Mammary epithelial cell (primary cell): ENCODE measurements at regions of chr16 and their contacts with region 1.

Region 1: DNA sequence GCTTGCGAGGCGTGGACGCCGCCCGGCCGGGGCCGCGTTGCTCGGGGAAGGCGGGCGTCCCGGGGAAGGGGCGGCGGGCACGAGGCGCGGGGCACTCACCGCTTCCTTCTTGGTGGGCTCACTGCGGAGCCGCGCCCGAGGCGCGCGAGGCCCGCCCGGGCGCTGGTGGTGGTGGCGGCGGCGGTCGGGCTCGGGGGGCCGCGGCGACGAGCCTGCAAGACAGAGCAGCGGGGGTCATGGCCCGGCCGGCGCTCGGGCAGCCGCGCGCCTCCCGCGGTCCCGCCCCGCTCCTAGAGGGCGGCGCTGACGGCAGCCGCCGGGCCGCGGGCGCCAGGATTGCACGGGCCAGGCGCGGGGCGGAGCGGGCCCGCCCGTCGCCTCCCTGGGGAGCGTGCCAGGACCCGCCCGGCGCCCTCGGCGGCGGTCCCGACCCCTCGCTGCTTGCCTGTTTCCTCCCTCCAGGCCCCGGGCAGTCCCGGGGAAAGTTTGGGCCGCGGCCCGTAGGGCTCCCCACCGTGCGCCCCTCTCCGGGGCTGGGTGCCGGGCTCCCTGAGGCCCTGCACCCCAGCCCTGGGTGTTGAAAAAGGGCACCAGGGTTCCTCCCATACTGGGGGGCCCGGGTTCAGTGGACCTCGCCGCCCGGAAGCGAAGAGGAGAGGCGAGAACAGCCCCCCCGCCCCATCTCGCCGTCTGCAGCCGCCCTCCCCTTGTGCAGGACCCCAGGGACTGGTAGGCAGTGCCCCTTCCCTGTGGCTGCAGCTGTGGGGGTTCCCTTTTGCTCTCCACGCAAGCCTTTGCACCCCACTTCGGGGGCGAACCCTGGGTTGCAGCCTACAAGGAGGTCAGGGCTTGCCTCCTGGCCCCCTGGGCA is at the start of gene C16orf74:
- DNase-seq: peak; percentile 68
- H3K4me3 ChIP-seq: peak within 1 kb of the TSS; percentile 84 to 92 (median 86)
- H3K27ac ChIP-seq: peak within 1 kb of the TSS; percentile 69
- H3K4me1 ChIP-seq: peaks cover 63% of the 10 kb centered on the region
- H3K27me3 ChIP-seq: no peaks in the 10 kb centered on the region
- CTCF ChIP-seq: no peak
- total RNA-seq, gene C16orf74: 19.7 to 121 TPM

Region 2: DNA sequence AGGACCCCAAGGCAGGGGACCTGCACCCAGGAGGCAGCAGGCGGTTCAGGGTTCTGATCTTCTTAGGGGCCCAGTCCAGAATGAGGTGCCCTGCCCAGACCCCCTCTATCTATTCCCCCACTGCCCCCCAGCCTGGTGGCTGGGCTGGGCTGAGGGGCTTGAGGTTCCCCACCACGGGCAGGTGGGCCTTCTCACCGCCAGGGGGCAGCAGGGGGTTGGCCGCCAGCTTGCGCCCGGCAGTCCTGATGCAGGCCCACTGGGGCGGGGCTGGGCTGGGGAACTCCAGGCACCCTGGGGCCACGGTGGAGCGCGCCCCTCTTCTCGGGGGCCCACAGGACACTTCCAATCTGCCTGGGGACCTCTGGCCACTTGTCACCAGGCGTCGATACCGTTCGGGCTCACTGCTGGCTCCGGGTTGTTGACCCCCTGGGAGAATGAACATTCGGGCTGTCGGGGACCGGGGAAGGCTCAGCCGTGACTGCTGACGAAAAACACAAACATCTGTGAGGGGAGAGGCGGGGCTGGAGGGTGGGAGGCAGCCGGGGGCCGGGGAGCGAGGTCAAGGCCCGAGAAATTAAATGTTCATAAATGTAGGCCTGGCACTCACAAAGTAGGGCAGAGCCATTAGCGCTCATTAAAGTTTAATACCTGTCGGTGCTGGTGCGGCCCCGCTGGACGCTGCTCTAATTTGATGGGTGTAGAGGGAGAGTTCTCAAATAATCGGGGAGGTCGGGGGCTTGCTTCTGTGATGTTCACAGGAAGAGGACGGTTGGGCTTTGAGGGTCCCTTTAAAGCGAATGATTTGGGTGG is 357.2 kb before region 1 on chr16:
- CTCF ChIA-PET with region 1: no interaction called
- dilution Hi-C with region 1: no loop called
- in situ Hi-C with region 1: no loop called
- intact Hi-C with region 1: loop called (anchors 10 kb)
- DNase-seq: no peak
- H3K4me3 ChIP-seq: no peak overlapping the region
- H3K27ac ChIP-seq: no peak overlapping the region
- H3K4me1 ChIP-seq: peaks cover 54% of the 10 kb centered on the region
- H3K27me3 ChIP-seq: no peaks in the 10 kb centered on the region
- CTCF ChIP-seq: peak; percentile 31 to 49

Region 3: DNA sequence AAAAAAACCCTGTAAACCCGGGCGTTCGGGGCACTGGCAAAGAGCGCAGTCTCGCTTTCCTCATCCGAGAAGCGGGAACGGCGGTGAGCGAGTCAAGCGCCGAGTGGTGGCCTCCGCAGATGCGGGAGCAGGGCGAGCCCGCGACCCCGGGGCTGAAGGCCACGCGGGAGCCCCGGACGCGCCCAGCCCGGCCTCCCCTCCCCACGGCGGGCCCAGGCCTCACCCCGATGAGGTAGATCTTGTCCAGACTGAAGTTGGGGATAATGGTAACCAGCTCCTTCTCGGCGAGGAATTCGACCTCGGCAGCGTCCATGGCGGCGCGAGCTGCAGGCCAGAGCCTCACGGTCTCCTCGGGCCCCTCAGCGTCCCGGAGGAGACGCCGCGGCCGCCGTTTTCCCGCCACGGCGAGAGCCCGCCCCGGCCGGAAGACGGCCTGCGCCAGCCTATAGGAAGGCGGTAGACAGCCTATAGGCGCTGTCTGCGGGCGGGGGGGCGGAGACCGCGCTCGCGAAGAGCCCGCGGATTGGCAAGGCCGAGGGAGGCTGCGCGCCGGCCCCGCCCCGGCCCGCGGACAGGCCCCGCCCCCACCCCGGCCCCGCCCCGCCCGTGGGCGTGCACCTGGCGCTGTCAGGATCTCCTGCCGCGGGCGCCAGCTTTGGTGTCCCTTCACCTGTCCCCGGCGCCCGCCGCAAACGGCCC is 62.3 kb before region 1 on chr16 and contains the start of gene GINS2:
- CTCF ChIA-PET with region 1: interaction called, 4 read pairs
- dilution Hi-C with region 1: no loop called
- in situ Hi-C with region 1: no loop called
- intact Hi-C with region 1: loop called (anchors 2 kb)
- DNase-seq: peak; percentile 85
- H3K4me3 ChIP-seq: peak within 1 kb of the TSS; percentile 62 to 91 (median 72)
- H3K27ac ChIP-seq: peak within 1 kb of the TSS; percentile 44
- H3K4me1 ChIP-seq: peaks cover 7% of the 10 kb centered on the region
- H3K27me3 ChIP-seq: no peaks in the 10 kb centered on the region
- CTCF ChIP-seq: no peak
- total RNA-seq, gene GINS2: 1.5 to 32.5 TPM

Region 4: DNA sequence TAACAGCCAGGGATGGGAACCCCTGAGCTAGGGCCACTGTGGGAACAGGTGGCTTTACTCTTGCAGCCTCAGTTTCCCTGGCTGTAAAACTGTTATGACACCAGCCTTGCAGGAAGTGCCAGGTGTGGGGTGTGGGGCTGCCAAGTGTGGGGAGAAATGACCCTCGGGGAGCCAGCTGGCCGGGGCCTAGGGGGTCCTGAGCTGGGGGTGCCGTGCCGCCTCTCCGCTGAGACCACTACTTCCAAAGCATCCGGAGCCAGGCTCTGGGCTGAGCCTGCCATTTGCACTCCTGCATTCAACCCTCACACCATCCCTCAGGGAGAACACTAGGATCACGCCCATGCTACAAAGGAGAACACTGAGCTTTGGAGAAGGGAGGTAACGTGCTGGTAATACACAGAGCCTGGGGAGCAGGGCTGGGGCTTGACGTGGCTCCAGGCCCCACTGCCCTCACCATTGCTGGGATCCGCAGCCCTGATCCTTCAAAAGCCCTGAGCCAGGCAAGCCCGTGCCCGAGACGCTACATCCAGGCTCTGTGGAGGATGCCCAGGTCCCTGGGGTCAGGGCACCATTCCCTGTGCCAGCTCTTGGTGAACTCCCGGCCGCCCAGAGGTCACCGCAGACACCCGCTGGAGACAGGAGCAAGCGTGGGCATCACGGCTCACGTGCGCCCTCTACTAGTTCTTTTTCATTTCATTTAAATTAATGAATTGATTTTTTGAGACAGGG is 33.5 kb before region 1 on chr16:
- CTCF ChIA-PET with region 1: no interaction called
- dilution Hi-C with region 1: no loop called
- in situ Hi-C with region 1: no loop called
- intact Hi-C with region 1: loop called (anchors 2 kb)
- DNase-seq: no peak
- H3K4me3 ChIP-seq: no peak overlapping the region
- H3K27ac ChIP-seq: no peak overlapping the region
- H3K4me1 ChIP-seq: peaks cover 76% of the 10 kb centered on the region
- H3K27me3 ChIP-seq: no peaks in the 10 kb centered on the region
- CTCF ChIP-seq: peak; percentile 41 to 63

Region 5: DNA sequence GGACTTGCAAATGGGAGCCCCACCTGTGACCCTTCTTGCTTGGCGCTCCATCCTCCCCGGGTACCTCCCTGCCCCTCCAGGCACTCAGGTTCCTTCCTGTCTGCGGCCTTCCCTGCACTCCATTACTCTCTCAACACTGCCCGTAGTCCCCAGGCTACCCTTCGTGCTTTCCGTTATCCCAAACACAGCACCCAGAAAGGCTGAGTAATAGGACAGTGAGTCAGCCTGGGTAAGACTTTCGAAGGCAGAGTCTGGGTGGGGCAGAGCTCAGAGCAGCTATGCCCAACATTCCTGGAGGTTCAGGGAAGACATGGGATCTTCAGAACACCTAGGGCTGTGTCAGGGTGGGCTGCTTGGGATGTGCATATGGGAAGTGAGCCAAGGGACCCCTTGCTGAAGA is 16.5 kb after region 1 on chr16:
- CTCF ChIA-PET with region 1: interaction called, 12 read pairs
- dilution Hi-C with region 1: no loop called
- in situ Hi-C with region 1: no loop called
- intact Hi-C with region 1: loop called (anchors 2 kb)
- DNase-seq: peak; percentile 92
- H3K4me3 ChIP-seq: no peak overlapping the region
- H3K27ac ChIP-seq: peak overlapping the region; percentile 79
- H3K4me1 ChIP-seq: peaks cover 16% of the 10 kb centered on the region
- H3K27me3 ChIP-seq: no peaks in the 10 kb centered on the region
- CTCF ChIP-seq: no peak

Region 6: GRCh38 chr16:87387942-87388817 is 1637.1 kb after region 1 on chr16:
- CTCF ChIA-PET with region 1: no interaction called
- dilution Hi-C with region 1: no loop called
- in situ Hi-C with region 1: no loop called
- intact Hi-C with region 1: loop called (anchors 5 kb)
- DNase-seq: peak; percentile 99
- H3K4me3 ChIP-seq: peak overlapping the region in 1 of 3 experiments; percentile 20
- H3K27ac ChIP-seq: peak overlapping the region; percentile 62
- H3K4me1 ChIP-seq: peaks cover 26% of the 10 kb centered on the region
- H3K27me3 ChIP-seq: no peaks in the 10 kb centered on the region
- CTCF ChIP-seq: no peak